IMR-90 (cell line): ENCODE measurements at regions of chr17 and their contacts with region 1.

Region 1: GRCh38 chr17:48724251-48725003 is 1.4 kb downstream of the PRAC2 start:
- DNase-seq: peak; percentile 67
- ATAC-seq: peak; percentile 94
- H3K4me3 ChIP-seq: no peak overlapping the region
- H3K27ac ChIP-seq: no peak overlapping the region
- H3K4me1 ChIP-seq: no peaks in the 10 kb centered on the region
- H3K27me3 ChIP-seq: peaks cover 95% of the 10 kb centered on the region
- CTCF ChIP-seq: peak; percentile 84
- POLR2A ChIP-seq: no peak
- RAD21 ChIP-seq: peak; percentile 80

Region 2: GRCh38 chr17:48773245-48773644 is 48.8 kb after region 1 on chr17:
- CTCF ChIA-PET with region 1: no interaction called
- POLR2A ChIA-PET with region 1: no interaction called
- dilution Hi-C with region 1: no loop called
- in situ Hi-C with region 1: no loop called
- intact Hi-C with region 1: no loop called
- DNase-seq: no peak
- ATAC-seq: no peak
- H3K4me3 ChIP-seq: no peak overlapping the region
- H3K27ac ChIP-seq: no peak overlapping the region
- H3K4me1 ChIP-seq: no peaks in the 10 kb centered on the region
- H3K27me3 ChIP-seq: peaks cover 33% of the 10 kb centered on the region
- CTCF ChIP-seq: no peak
- POLR2A ChIP-seq: no peak
- RAD21 ChIP-seq: no peak

Region 3: GRCh38 chr17:48804925-48805411 is 80.5 kb after region 1 on chr17:
- CTCF ChIA-PET with region 1: interaction called, 3 read pairs
- POLR2A ChIA-PET with region 1: no interaction called
- dilution Hi-C with region 1: no loop called
- in situ Hi-C with region 1: loop called (anchors 5 kb)
- intact Hi-C with region 1: no loop called
- DNase-seq: peak; percentile 37
- ATAC-seq: peak; percentile 98
- H3K4me3 ChIP-seq: no peak overlapping the region
- H3K27ac ChIP-seq: no peak overlapping the region
- H3K4me1 ChIP-seq: peaks cover 7% of the 10 kb centered on the region
- H3K27me3 ChIP-seq: peaks cover 4% of the 10 kb centered on the region
- CTCF ChIP-seq: peak; percentile 87
- POLR2A ChIP-seq: 0 out of 2 replicates have a peak, but pooled peaks have one; percentile 31
- RAD21 ChIP-seq: peak; percentile 86

Region 4: GRCh38 chr17:48997083-48997826 is 272.8 kb after region 1 on chr17 and contains the start of gene IGF2BP1:
- CTCF ChIA-PET with region 1: no interaction called
- POLR2A ChIA-PET with region 1: no interaction called
- dilution Hi-C with region 1: no loop called
- in situ Hi-C with region 1: no loop called
- intact Hi-C with region 1: no loop called
- DNase-seq: peak; percentile 78
- ATAC-seq: peak; percentile 50
- H3K4me3 ChIP-seq: peak within 1 kb of the TSS; percentile 93
- H3K27ac ChIP-seq: peak within 1 kb of the TSS; percentile 95
- H3K4me1 ChIP-seq: no peaks in the 10 kb centered on the region
- H3K27me3 ChIP-seq: peaks cover 20% of the 10 kb centered on the region
- CTCF ChIP-seq: no peak
- POLR2A ChIP-seq: no peak
- RAD21 ChIP-seq: no peak
- total RNA-seq, gene IGF2BP1: 10.2 and 11.9 TPM in 2 replicates